Colonic mucosa (tissue), 4 donors: ENCODE measurements at regions of chr2 and their contacts with region 1.

Region 1: DNA sequence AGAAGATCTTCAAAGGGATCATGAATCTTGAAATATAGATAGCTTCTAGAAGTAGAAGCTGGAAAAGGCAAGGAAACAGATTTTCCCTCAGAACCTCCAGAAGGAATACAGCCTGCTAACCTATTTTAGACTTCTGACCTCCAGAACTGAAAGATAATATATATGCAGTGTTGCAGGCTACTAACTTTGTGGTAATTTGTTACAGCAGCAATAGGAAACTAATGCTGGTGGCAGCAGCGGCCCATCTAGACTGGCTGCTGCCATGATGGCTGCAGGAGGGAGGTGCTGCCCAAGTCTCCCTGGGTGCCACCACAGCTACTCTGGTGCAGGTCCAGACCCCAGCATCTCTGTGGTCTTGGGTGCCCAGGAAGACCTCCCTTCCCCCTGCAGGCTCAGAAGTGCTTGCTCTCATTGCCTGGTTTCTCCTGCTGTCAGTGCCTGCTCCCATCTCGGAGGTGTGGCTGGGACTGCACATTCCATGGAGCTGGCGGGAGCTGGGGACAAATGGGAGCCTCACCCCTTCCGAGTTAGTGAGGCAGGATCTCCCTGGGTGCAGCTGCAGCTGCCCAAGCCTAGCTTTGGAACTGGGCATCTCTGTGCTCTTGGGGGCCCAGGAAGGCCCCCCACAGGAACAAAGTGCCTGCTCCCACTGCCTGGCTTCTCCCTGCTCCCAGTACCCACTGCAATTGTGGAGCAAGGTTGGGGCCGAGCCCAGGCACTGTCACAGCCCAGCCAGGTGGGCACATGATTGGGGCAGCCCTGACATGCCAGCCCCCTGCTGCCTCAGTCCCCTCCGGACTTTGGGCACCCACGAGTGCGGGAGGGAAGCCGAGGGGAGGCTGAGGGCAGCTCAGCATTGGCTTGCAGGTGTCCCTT is 18.1 kb upstream of the CCDC88A start:
- DNase-seq: no peak
- H3K4me3 ChIP-seq: no peak overlapping the region
- H3K27ac ChIP-seq: no peak overlapping the region
- H3K4me1 ChIP-seq: no peaks in the 10 kb centered on the region
- H3K27me3 ChIP-seq: no peaks in the 10 kb centered on the region
- CTCF ChIP-seq: no peak

Region 2: GRCh38 chr2:55175254-55176025 is 262.3 kb before region 1 on chr2:
- intact Hi-C with region 1: loop called (anchors 5 kb)
- DNase-seq: no peak
- H3K4me3 ChIP-seq: no peak overlapping the region
- H3K27ac ChIP-seq: no peak overlapping the region
- H3K4me1 ChIP-seq: no peaks in the 10 kb centered on the region
- H3K27me3 ChIP-seq: no peaks in the 10 kb centered on the region
- CTCF ChIP-seq: peak; percentile 49

Region 3: DNA sequence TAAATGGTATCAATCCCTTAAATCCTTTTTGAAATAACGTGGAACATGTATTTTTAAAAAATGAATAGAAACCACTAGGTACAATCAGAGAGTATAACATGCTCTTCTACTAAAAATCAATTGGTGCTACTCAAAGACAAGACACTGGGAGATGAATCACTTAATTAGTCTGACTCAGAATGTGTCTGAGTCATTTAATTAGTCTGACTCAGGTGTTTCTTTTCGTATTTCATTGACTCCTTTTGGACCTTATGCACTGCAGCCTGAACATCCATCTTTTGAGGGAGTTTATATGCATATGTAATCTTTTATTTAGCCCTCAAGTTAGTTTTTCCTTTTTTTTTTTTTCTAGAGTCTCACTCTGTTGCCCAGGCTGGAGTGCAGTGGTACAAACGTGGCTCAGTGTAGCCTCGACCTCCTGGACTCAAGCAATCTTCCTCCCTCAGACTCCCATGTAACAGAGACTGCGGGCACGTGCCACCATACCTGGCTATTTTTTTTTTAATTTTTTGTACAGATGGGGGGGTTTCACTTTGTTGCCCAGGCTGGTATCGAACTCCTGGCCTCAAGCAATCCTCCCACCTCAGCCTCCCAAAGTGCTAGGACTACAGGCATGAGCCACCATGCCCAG is 153.2 kb after region 1 on chr2:
- intact Hi-C with region 1: no loop called
- DNase-seq: no peak
- H3K4me3 ChIP-seq: no peak overlapping the region
- H3K27ac ChIP-seq: no peak overlapping the region
- H3K4me1 ChIP-seq: no peaks in the 10 kb centered on the region
- H3K27me3 ChIP-seq: no peaks in the 10 kb centered on the region
- CTCF ChIP-seq: no peak